Activated CD8-positive, alpha-beta T cell treated with anti-CD3 and anti-CD28 coated beads, Interleukin-2, amount 10 ng/mL, durations not matched to agents 7 days and 5 days (primary cell): ENCODE measurements at regions of chr7 and their contacts with region 1.

Region 1: GRCh38 chr7:4973728-4974198 is 14.8 kb upstream of the MMD2 start:
- DNase-seq: peak; percentile 96
- ATAC-seq: peak; percentile 95
- H3K4me3 Mint-ChIP-seq: peak overlapping the region; percentile 90
- H3K27ac Mint-ChIP-seq: peak overlapping the region; percentile 95
- H3K4me1 Mint-ChIP-seq: peaks cover 23% of the 10 kb centered on the region
- H3K27me3 Mint-ChIP-seq: no peaks in the 10 kb centered on the region

Region 2: GRCh38 chr7:4689668-4690067 is 284.1 kb before region 1 on chr7:
- CTCF ChIA-PET with region 1: no interaction called
- POLR2A ChIA-PET with region 1: no interaction called
- DNase-seq: no peak
- ATAC-seq: no peak
- H3K4me3 Mint-ChIP-seq: no peak overlapping the region
- H3K27ac Mint-ChIP-seq: no peak overlapping the region
- H3K4me1 Mint-ChIP-seq: peaks cover 34% of the 10 kb centered on the region
- H3K27me3 Mint-ChIP-seq: no peaks in the 10 kb centered on the region

Region 3: GRCh38 chr7:5083311-5083711 is 109.5 kb after region 1 on chr7:
- CTCF ChIA-PET with region 1: interaction called, 48 read pairs
- POLR2A ChIA-PET with region 1: interaction called, 3 read pairs
- DNase-seq: no peak
- ATAC-seq: no peak
- H3K4me3 Mint-ChIP-seq: no peak overlapping the region
- H3K27ac Mint-ChIP-seq: no peak overlapping the region
- H3K4me1 Mint-ChIP-seq: peaks cover 6% of the 10 kb centered on the region
- H3K27me3 Mint-ChIP-seq: peaks cover 9% of the 10 kb centered on the region

Region 4: GRCh38 chr7:5173496-5173895 is 199.7 kb after region 1 on chr7:
- CTCF ChIA-PET with region 1: interaction called, 10 read pairs
- POLR2A ChIA-PET with region 1: no interaction called
- DNase-seq: no peak
- ATAC-seq: no peak
- H3K4me3 Mint-ChIP-seq: no peak overlapping the region
- H3K27ac Mint-ChIP-seq: no peak overlapping the region
- H3K4me1 Mint-ChIP-seq: peaks cover 12% of the 10 kb centered on the region
- H3K27me3 Mint-ChIP-seq: peaks cover 3% of the 10 kb centered on the region